ENCODE measurements at regions of chr9 and their contacts with region 1.

Region 1: GRCh38 chr9:93108291-93109041 is 12.4 kb downstream of the CARD19 start:
- DNase-seq: peak in 1 of 9 experiments; percentile 26
- ATAC-seq: no peak
- H3K4me3 ChIP-seq: no peak overlapping the region
- H3K4me3 Mint-ChIP-seq: no peak overlapping the region
- H3K27ac ChIP-seq: no peak overlapping the region
- H3K27ac Mint-ChIP-seq: no peak overlapping the region
- H3K4me1 ChIP-seq: peaks cover 47% of the 10 kb centered on the region
- H3K4me1 Mint-ChIP-seq: peaks cover 37% of the 10 kb centered on the region
- H3K27me3 ChIP-seq: no peaks in the 10 kb centered on the region
- H3K27me3 Mint-ChIP-seq: no peaks in the 10 kb centered on the region
- CTCF ChIP-seq: no peak

Region 2: DNA sequence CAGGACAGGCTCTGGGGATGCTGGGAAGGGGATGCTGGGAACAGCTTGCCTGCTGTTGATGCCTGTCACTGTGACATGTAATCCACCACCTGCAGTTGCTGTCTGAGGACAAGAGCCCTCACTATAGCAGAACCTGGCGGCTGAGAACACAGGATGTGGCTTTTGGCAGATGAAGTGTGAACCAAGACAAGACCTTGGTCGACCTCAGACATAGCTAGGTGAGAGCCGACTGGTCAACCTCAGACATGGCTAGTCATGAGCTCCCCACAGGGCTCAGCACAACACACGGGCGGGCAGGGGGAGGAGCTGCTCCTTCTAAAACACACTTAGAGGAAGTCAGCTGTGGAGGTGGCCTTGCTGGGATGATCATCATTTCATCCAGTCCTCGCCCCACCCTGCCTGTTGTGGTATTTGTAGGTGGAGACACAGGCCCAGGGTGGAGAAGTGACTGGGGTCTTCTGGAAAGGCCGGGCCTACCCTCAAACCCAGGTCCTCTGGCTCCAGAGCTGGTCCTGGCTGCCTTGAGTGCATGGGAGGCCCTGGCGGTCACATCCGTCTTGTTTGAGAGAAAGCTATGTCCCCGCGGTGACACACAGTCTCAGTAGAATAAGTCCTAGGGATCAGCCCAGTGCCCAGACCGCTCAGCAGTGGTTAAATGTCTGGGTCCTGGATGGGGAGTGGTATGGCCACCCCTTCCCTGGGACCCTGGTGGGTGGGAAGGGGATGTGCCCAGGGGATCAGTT is 43.9 kb before region 1 on chr9:
- CTCF ChIA-PET with region 1: interaction called, 14 read pairs
- POLR2A ChIA-PET with region 1: interaction called, 6 read pairs
- intact Hi-C with region 1: no loop called
- DNase-seq: peak; percentile 78 to 97 (median 89)
- ATAC-seq: peak; percentile 89
- H3K4me3 ChIP-seq: peak overlapping the region; percentile 24 to 91
- H3K4me3 Mint-ChIP-seq: peak overlapping the region; percentile 83
- H3K27ac ChIP-seq: peak overlapping the region; percentile 70 to 83
- H3K27ac Mint-ChIP-seq: peak overlapping the region; percentile 100
- H3K4me1 ChIP-seq: peaks cover 94% of the 10 kb centered on the region
- H3K4me1 Mint-ChIP-seq: peaks cover 88% of the 10 kb centered on the region
- H3K27me3 ChIP-seq: no peaks in the 10 kb centered on the region
- H3K27me3 Mint-ChIP-seq: no peaks in the 10 kb centered on the region
- CTCF ChIP-seq: no peak

Region 3: DNA sequence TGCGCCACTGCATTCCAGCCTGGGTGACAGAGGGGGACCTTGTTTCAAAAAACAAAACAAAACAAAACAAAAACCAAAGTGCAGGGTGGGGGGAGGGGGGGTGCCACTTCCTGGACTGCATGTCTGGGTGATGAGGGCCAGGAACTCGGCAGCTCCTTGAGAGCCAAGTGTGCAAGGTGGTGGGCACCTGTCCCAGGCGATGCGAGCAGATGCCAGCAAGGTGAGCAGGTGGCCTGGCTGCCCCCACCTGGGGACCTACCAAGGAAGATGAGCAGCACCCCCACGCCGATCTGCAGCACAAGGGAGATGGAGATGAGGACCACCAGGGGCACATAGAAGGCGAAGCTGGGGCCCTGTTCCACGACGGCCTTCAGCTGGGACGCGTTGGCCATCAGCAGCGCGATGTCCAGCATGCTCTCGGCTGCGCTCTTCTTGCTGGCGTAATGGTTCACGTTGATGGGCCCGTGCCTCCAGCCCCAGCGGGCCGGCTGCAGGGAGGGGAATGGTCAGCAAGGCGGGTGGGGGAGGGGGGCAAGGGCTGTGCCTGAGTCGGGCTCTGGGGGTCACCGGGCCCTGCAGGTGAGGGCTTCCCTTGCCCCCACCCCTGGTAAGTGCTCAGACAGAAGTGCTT is 17.8 kb after region 1 on chr9:
- CTCF ChIA-PET with region 1: interaction called, 26 read pairs
- POLR2A ChIA-PET with region 1: interaction called, 6 read pairs
- intact Hi-C with region 1: no loop called
- DNase-seq: peak in 3 of 9 experiments; percentile 61 to 81 (median 70)
- ATAC-seq: peak; percentile 57
- H3K4me3 ChIP-seq: no peak overlapping the region
- H3K4me3 Mint-ChIP-seq: peak overlapping the region; percentile 81
- H3K27ac ChIP-seq: peak overlapping the region; percentile 37 to 65
- H3K27ac Mint-ChIP-seq: peak overlapping the region; percentile 97
- H3K4me1 ChIP-seq: peaks cover 47% of the 10 kb centered on the region
- H3K4me1 Mint-ChIP-seq: peaks cover 60% of the 10 kb centered on the region
- H3K27me3 ChIP-seq: no peaks in the 10 kb centered on the region
- H3K27me3 Mint-ChIP-seq: no peaks in the 10 kb centered on the region
- CTCF ChIP-seq: no peak

Region 4: GRCh38 chr9:93159601-93160471 is 51.4 kb after region 1 on chr9:
- CTCF ChIA-PET with region 1: interaction called, 6 read pairs
- POLR2A ChIA-PET with region 1: no interaction called
- intact Hi-C with region 1: loop called in 1 of 2 experiments (anchors 2 kb)
- DNase-seq: peak; percentile 43 to 81 (median 71)
- ATAC-seq: peak; percentile 91
- H3K4me3 ChIP-seq: no peak overlapping the region
- H3K4me3 Mint-ChIP-seq: no peak overlapping the region
- H3K27ac ChIP-seq: no peak overlapping the region
- H3K27ac Mint-ChIP-seq: no peak overlapping the region
- H3K4me1 ChIP-seq: peaks cover 6% of the 10 kb centered on the region
- H3K4me1 Mint-ChIP-seq: peaks cover 6% of the 10 kb centered on the region
- H3K27me3 ChIP-seq: peaks cover 0 to 5% of the 10 kb centered on the region in 2 experiments
- H3K27me3 Mint-ChIP-seq: no peaks in the 10 kb centered on the region
- CTCF ChIP-seq: peak; percentile 90

Region 5: DNA sequence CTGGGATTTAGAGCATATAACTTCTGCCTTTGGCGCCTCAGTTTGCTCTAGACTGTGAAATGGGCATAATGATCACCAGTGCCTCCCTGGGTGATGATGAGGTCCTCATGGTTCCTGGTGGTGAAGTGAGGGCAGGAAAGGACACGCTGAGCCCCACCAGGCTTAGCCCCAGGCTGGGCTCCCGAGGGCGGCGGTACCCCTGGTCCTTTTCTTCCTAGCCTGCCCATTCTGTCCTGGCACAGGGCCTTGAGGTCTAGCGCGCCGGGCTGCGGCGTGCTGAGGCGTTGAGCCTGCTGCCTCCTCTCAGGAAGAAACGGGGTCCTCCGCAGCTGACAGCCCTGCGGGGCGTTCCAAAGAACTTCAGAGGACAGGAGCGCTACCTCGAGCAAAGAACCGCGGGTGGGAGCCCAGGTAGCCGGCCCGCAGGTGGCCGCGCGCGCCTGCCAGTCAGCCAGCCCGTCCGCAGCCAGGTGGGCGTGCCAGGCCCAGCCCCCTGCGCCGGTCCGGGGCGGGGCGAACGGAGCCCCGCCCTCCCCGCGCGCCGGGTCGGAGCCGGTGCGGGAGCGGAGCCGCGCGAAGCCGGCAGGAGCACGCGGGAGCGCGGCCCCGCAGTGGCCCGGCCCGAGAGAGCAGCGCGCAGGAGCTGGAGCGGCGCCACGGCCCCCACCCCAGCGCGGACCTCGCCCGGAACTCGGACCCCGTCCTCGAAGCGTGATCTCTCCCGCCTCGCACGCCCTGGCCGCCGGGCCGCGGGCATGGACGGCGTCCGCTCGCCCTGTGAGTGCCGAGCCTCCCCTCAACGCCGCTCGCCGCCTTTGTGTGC is 75.4 kb after region 1 on chr9 and contains the start of gene WNK2:
- CTCF ChIA-PET with region 1: no interaction called
- POLR2A ChIA-PET with region 1: no interaction called
- intact Hi-C with region 1: no loop called
- DNase-seq: peak in 7 of 9 experiments; percentile 10 to 66 (median 42)
- ATAC-seq: peak; percentile 89
- H3K4me3 ChIP-seq: peak within 1 kb of the TSS; percentile 33 to 52
- H3K4me3 Mint-ChIP-seq: peak within 1 kb of the TSS; percentile 76
- H3K27ac ChIP-seq: no peak within 1 kb of the TSS
- H3K27ac Mint-ChIP-seq: no peak within 1 kb of the TSS
- H3K4me1 ChIP-seq: peaks cover 8% of the 10 kb centered on the region
- H3K4me1 Mint-ChIP-seq: peaks cover 8% of the 10 kb centered on the region
- H3K27me3 ChIP-seq: peaks cover 10 to 12% of the 10 kb centered on the region in 2 experiments
- H3K27me3 Mint-ChIP-seq: peaks cover 41% of the 10 kb centered on the region
- CTCF ChIP-seq: no peak
- total RNA-seq, gene WNK2: 0.25 to 0.30 TPM

Region 6: DNA sequence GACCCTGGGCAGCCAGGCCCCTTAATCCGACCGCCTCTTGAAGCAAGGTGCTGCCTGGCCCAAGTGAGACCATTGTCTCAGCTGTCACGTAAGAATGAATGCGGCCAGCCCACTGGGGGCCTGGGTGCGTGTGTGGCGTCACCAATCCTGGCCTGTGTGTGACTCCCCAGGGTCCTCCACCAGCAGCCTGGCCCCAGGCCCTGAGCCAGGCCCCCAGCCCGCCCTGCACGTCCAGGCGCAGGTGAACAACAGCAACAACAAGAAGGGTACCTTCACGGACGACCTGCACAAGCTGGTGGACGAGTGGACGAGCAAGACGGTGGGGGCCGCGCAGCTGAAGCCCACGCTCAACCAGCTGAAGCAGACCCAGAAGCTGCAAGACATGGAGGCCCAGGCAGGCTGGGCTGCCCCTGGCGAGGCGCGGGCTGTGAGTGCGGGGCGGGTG is 199.7 kb after region 1 on chr9:
- CTCF ChIA-PET with region 1: interaction called, 25 read pairs
- POLR2A ChIA-PET with region 1: no interaction called
- intact Hi-C with region 1: loop called in 1 of 2 experiments (anchors 1 kb)
- DNase-seq: peak in 1 of 9 experiments; percentile 35
- ATAC-seq: no peak
- H3K4me3 ChIP-seq: no peak overlapping the region
- H3K4me3 Mint-ChIP-seq: no peak overlapping the region
- H3K27ac ChIP-seq: no peak overlapping the region
- H3K27ac Mint-ChIP-seq: no peak overlapping the region
- H3K4me1 ChIP-seq: no peaks in the 10 kb centered on the region
- H3K4me1 Mint-ChIP-seq: no peaks in the 10 kb centered on the region
- H3K27me3 ChIP-seq: peaks cover 0 to 5% of the 10 kb centered on the region in 2 experiments
- H3K27me3 Mint-ChIP-seq: peaks cover 6% of the 10 kb centered on the region
- CTCF ChIP-seq: no peak